PC-9 (cell line): ENCODE measurements at regions of chr12 and their contacts with region 1.

Region 1: GRCh38 chr12:79344855-79345847 is 345.6 kb downstream of the PAWR start:
- DNase-seq: peak in 1 of 2 experiments; percentile 37
- H3K4me3 ChIP-seq: no peak overlapping the region
- H3K27ac ChIP-seq: no peak overlapping the region
- H3K4me1 ChIP-seq: no peaks in the 10 kb centered on the region
- H3K27me3 ChIP-seq: no peaks in the 10 kb centered on the region
- CTCF ChIP-seq: peak; percentile 79

Region 2: GRCh38 chr12:78002878-78003277 is 1342.3 kb before region 1 on chr12:
- CTCF ChIA-PET with region 1: no interaction called
- POLR2A ChIA-PET with region 1: no interaction called
- intact Hi-C with region 1: loop called (anchors 10 kb)
- DNase-seq: no peak
- H3K4me3 ChIP-seq: no peak overlapping the region
- H3K27ac ChIP-seq: no peak overlapping the region
- H3K4me1 ChIP-seq: no peaks in the 10 kb centered on the region
- H3K27me3 ChIP-seq: no peaks in the 10 kb centered on the region
- CTCF ChIP-seq: no peak

Region 3: GRCh38 chr12:78146365-78146772 is 1198.8 kb before region 1 on chr12:
- CTCF ChIA-PET with region 1: no interaction called
- POLR2A ChIA-PET with region 1: no interaction called
- intact Hi-C with region 1: loop called (anchors 10 kb)
- DNase-seq: no peak
- H3K4me3 ChIP-seq: no peak overlapping the region
- H3K27ac ChIP-seq: no peak overlapping the region
- H3K4me1 ChIP-seq: no peaks in the 10 kb centered on the region
- H3K27me3 ChIP-seq: no peaks in the 10 kb centered on the region
- CTCF ChIP-seq: peak; percentile 86

Region 4: GRCh38 chr12:78470354-78471195 is 874.6 kb before region 1 on chr12:
- CTCF ChIA-PET with region 1: interaction called, 3 read pairs
- POLR2A ChIA-PET with region 1: no interaction called
- intact Hi-C with region 1: loop called (anchors 2 kb)
- DNase-seq: peak in 1 of 2 experiments; percentile 9
- H3K4me3 ChIP-seq: no peak overlapping the region
- H3K27ac ChIP-seq: no peak overlapping the region
- H3K4me1 ChIP-seq: no peaks in the 10 kb centered on the region
- H3K27me3 ChIP-seq: no peaks in the 10 kb centered on the region
- CTCF ChIP-seq: peak; percentile 71

Region 5: GRCh38 chr12:79531122-79531913 is 186.2 kb after region 1 on chr12:
- CTCF ChIA-PET with region 1: no interaction called
- POLR2A ChIA-PET with region 1: no interaction called
- intact Hi-C with region 1: no loop called
- DNase-seq: no peak
- H3K4me3 ChIP-seq: no peak overlapping the region
- H3K27ac ChIP-seq: no peak overlapping the region
- H3K4me1 ChIP-seq: peaks cover 22% of the 10 kb centered on the region
- H3K27me3 ChIP-seq: no peaks in the 10 kb centered on the region
- CTCF ChIP-seq: no peak